ENCODE measurements at regions of chr1 and their contacts with region 1.

Region 1: GRCh38 chr1:110339407-110340206 is 430 bp downstream of the RBM15 start:
- DNase-seq: no peak
- H3K4me3 ChIP-seq: peak overlapping the region; percentile 80 to 93 (median 90)
- H3K27ac ChIP-seq: peak overlapping the region; percentile 90 to 98 (median 95)
- H3K4me1 ChIP-seq: peaks cover 44 to 58% (median 55%) of the 10 kb centered on the region in 4 donors
- H3K27me3 ChIP-seq: no peaks in the 10 kb centered on the region
- CTCF ChIP-seq: peak in 2 of 3 experiments; percentile 44 to 63
- EP300 ChIP-seq: no peak
- POLR2A ChIP-seq: peak; percentile 93

Region 2: DNA sequence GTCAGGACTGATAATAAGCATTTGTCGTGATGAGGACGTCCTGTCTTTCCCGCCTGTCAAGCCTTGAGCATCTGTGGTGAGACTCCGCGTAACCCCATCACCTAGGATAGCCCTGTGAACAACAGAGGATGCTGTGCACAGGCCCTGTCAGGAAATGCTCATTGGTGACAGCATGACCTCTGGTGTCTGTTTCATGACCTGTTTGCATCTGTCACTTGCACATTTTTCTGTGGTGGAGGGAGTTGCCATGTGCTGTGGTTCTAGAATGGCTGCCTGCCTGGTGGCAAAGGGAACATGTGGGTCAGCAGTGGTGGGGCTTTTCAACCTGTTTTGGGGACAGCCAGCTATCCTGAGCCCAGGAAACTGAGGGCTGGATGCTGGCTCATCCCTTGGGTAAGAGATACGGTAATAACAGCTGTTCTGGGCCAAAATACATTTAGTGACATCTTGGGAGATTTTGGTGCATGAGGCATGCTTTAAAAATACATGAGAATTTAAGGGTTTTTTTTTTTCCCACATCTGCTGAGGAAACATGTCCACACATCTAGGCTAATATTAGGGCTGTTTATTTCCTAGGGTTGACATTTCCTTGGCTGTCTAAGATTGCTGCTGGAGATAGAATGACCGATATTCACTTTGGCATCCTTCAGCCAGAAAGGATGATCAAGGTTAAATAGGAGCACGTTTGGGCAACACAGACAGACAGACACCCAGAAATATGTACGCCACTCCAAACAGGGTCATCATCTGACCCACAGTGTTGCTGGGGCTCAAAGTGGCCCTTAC is 76.6 kb before region 1 on chr1:
- intact Hi-C with region 1: no loop called
- DNase-seq: no peak
- H3K4me3 ChIP-seq: no peak overlapping the region
- H3K27ac ChIP-seq: no peak overlapping the region
- H3K4me1 ChIP-seq: no peaks in the 10 kb centered on the region
- H3K27me3 ChIP-seq: peaks cover 0 to 22% (median 0%) of the 10 kb centered on the region in 4 donors
- CTCF ChIP-seq: no peak
- EP300 ChIP-seq: no peak
- POLR2A ChIP-seq: no peak

Region 3: DNA sequence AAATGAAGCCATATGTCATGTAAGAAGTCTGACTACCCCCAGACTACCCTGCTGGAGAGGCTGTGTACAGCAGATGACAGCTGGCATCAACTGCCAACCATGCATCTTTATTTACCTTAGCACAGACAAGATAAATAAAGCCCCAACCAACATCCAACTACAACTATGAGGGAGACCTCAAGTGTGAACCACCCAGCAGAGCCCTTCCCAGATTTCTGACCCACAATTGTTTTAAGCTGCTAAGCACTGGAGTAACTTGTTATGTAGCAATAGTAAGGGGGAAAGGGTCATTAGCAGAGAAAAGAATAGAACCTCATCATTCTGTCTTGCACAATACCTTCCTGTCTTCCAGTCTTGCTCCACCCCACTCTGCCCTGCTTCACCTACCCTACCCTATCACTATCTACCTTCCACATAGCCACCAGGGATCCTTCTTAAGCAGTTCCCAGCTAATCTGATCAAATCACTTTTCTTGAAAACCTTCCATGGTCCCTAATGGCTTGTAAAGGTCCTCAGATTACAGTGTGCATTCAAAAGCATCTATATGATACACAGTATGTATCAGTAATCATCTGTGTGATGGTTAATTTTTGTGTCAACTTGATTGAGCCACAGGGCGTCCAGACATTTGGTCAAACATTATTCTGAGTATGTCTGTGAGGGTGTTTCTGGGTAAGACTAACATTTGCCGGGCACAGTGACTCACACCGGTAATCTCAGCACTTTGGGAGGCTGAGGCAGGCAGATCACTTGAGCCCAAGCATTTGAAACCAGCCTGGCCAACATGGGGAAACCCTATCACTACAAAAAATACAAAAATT is 20.1 kb before region 1 on chr1:
- intact Hi-C with region 1: no loop called
- DNase-seq: no peak
- H3K4me3 ChIP-seq: no peak overlapping the region
- H3K27ac ChIP-seq: no peak overlapping the region
- H3K4me1 ChIP-seq: no peaks in the 10 kb centered on the region
- H3K27me3 ChIP-seq: no peaks in the 10 kb centered on the region
- CTCF ChIP-seq: no peak
- EP300 ChIP-seq: no peak
- POLR2A ChIP-seq: no peak

Region 4: GRCh38 chr1:110390692-110391245 is 51.2 kb after region 1 on chr1 and contains the start of gene SLC16A4:
- intact Hi-C with region 1: loop called (anchors 5 kb)
- DNase-seq: no peak
- H3K4me3 ChIP-seq: peak within 1 kb of the TSS; percentile 37 to 56 (median 42)
- H3K27ac ChIP-seq: peak within 1 kb of the TSS; percentile 63 to 76 (median 72)
- H3K4me1 ChIP-seq: peaks cover 0 to 25% (median 18%) of the 10 kb centered on the region in 4 donors
- H3K27me3 ChIP-seq: no peaks in the 10 kb centered on the region
- CTCF ChIP-seq: no peak
- EP300 ChIP-seq: no peak
- POLR2A ChIP-seq: no peak
- total RNA-seq, gene SLC16A4: 5.8 to 8.8 (median 8.4) TPM

Region 5: DNA sequence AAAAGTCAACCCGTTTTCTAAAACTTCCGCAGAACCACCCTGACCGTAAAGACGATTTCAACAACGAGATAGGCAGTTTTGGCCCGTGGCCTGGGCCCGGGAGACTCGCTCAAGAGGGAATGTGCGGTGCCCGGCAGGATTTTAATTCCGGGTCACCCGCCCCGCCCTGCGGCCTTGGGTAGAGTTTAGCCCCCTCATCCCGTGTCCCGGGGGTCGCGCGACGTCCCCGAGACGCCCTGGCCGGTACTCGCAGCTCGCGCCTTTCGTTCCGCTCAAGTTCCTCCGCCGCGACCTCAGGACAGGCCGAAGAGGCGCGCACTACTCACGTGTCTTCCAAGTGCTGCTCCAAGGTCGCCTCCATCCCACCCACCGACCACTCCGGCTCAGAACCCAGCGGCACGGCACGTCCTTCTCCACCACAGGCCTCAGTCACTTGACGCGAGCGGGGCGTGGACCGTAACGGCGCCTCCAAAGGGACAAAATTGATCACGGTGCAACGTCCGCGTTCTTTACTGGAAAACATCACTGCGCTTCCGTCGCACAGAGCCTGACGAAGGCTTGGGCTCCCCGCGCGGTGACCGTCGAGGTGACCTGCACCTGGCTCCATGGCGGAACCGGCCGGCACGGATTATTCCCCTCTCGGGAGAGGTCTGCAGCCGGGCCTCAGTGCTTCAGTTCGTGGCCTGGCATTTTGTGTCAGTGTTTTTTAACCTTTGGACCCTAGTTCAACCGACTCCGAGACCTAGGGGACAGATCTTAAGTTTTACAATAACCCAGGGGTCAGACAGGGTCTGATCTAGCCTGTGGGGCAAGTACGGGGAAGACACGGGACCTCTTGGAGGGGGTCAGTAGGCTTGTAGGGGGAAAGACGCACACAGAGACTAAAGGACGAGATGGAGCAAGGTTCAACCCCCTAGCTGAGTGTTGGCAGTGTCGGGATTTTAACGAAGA is 67.9 kb after region 1 on chr1 and contains the start of gene LAMTOR5:
- intact Hi-C with region 1: loop called (anchors 5 kb)
- DNase-seq: peak; percentile 98
- H3K4me3 ChIP-seq: peak within 1 kb of the TSS; percentile 90 to 97 (median 94)
- H3K27ac ChIP-seq: peak within 1 kb of the TSS; percentile 94 to 96 (median 96)
- H3K4me1 ChIP-seq: peaks cover 20 to 30% (median 25%) of the 10 kb centered on the region in 4 donors
- H3K27me3 ChIP-seq: no peaks in the 10 kb centered on the region
- CTCF ChIP-seq: peak; percentile 15 to 34 (median 16)
- EP300 ChIP-seq: no peak
- POLR2A ChIP-seq: peak; percentile 89
- total RNA-seq, gene LAMTOR5: 59.9 to 113 (median 71.0) TPM

Region 6: DNA sequence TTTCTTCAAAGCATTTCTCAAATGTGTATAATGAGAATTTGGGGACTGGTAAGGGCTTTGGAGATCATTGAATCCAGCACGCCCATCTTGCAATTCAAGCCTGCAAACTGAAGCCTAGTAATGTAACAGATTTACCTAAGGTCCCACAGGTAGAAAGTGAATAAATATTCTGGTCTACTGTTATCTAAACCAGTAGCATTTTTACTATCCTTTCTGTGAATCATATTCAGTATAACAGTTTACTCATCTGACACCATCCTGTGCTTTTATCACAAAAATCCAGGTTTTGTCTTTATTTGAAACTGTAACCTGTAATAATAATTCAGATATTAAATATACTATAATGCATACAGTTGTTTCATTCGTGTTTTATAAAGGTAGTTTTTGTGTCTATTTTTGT is 317.7 kb after region 1 on chr1:
- intact Hi-C with region 1: no loop called
- DNase-seq: no peak
- H3K4me3 ChIP-seq: no peak overlapping the region
- H3K27ac ChIP-seq: no peak overlapping the region
- H3K4me1 ChIP-seq: no peaks in the 10 kb centered on the region
- H3K27me3 ChIP-seq: peaks cover 0 to 12% (median 0%) of the 10 kb centered on the region in 4 donors
- CTCF ChIP-seq: no peak
- EP300 ChIP-seq: no peak
- POLR2A ChIP-seq: no peak

Measured in esophagus muscularis mucosa (tissue), 4 donors.